HepG2 (cell line): ENCODE measurements at regions of chr14 and their contacts with region 1.

Region 1: DNA sequence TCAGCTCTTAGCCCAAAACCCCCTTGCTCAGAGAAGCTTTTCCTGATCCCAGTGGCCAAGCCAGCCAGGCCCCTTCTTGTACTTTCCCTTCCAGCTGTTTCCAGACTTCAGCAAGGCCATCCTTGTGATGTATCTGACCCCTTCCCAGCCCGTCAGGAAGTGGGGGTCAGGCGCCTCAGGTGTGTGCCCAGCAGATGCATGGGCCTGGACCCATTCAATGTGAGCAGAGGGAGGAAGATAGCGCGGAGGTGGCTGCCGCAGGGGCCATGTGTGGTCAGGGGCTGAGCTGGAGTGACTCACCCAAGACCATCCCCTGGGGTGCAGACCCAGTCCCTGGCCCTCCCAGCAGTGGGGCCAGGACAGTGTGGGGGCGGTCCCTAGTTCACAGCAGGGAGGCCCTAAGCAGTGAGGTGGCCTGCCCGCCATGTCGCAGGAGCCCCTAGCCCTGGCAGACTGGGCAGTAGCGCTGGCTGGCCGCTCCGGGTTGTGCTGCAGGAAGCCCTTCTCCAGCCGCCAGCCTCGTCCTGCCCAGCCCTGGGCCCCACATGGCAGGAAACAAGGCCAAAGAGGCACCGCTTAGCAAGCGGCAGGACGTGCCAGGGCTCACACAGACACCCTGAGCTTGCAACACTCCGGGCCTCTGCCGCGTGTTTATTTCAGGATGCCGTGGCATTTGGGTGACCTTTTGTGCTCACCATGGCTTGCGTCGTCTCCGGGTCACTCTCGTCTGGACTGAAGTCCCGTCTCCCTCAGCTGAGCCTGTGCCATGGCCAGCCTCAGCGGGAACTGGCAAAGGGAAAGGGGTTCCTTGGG is 12.0 kb downstream of the ADSS1 start:
- DNase-seq: peak; percentile 81
- ATAC-seq: peak; percentile 61
- H3K4me3 ChIP-seq: peak overlapping the region in 1 of 3 experiments; percentile 15; a peak in 2 of 6 replicates
- H3K27ac ChIP-seq: peak overlapping the region; percentile 79
- H3K4me1 ChIP-seq: peaks cover 72% of the 10 kb centered on the region
- H3K27me3 ChIP-seq: no peaks in the 10 kb centered on the region
- CTCF ChIP-seq: 0 out of 2 replicates have a peak, but pooled peaks have one; percentile 30
- EP300 ChIP-seq: peak in 1 of 2 experiments; percentile 78; a peak in 1 of 4 replicates
- POLR2A ChIP-seq: peak in 1 of 2 experiments; percentile 38; a peak in 1 of 4 replicates
- RAD21 ChIP-seq: 0 out of 2 replicates have a peak, but pooled peaks have one; percentile 19

Region 2: GRCh38 chr14:104723648-104724406 is 12.2 kb before region 1 on chr14 and contains the start of gene ADSS1:
- CTCF ChIA-PET with region 1: no interaction called
- POLR2A ChIA-PET with region 1: interaction called, 10 read pairs
- in situ Hi-C with region 1: no loop called
- intact Hi-C with region 1: no loop called
- DNase-seq: peak; percentile 24
- ATAC-seq: peak; percentile 40
- H3K4me3 ChIP-seq: peak within 1 kb of the TSS; percentile 63 to 90 (median 68)
- H3K27ac ChIP-seq: peak within 1 kb of the TSS; percentile 49
- H3K4me1 ChIP-seq: peaks cover 67% of the 10 kb centered on the region
- H3K27me3 ChIP-seq: peaks cover 0 to 3% of the 10 kb centered on the region in 2 experiments; a peak in 1 of 5 replicates
- CTCF ChIP-seq: peak; percentile 90
- EP300 ChIP-seq: no peak
- POLR2A ChIP-seq: peak in 1 of 2 experiments; percentile 27; a peak in 1 of 4 replicates
- RAD21 ChIP-seq: peak; percentile 70
- total RNA-seq, gene ADSS1: 0.98 and 1.0 TPM in 2 replicates

Region 3: DNA sequence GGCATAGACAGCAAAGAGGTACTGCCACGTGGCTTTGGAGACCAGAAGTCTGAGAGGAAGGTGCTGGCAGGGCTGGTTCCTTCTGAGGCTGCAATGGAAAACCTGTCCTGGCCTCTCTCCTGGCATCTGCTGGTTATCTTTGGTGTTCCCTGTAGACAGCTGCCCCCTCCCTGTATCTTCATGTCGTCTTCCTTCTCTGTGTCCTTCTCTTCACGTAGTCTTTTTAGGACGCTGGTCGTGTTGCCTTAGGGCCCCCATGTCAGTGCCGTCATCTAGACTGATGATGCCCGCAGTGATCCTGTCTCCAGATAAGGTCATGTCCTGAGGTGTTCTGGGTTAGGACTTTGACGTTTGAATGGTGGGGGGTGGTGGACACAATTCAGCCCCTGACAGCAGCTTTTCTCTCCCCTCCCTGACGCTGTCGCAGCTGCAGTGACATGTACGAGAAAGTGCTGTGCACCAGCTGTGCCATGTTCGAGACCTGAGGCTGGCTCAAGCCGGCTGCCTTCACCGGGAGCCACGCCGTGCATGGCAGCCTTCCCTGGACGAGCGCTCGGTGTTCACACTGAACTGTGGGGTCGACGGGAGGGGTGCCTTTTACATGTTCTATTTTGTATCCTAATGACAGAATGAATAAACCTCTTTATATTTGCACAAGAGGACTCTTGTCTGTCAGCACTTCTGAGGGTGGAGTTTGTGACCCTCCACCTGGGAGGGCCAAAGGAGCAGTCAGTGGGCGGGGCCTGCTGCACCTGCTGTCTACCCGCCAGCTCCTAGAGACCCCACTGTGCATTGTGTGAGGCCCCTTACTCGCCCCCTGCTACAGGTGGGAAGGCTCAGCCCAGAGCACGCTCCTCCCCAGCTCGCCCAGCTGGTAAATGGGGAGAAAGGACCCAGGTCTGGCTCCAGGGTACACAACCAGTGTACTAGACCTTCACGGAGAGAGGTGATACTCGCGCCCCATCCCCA is 23.2 kb after region 1 on chr14:
- CTCF ChIA-PET with region 1: no interaction called
- POLR2A ChIA-PET with region 1: no interaction called
- in situ Hi-C with region 1: no loop called
- intact Hi-C with region 1: no loop called
- DNase-seq: no peak
- ATAC-seq: no peak
- H3K4me3 ChIP-seq: no peak overlapping the region
- H3K27ac ChIP-seq: peak overlapping the region; percentile 20
- H3K4me1 ChIP-seq: peaks cover 61% of the 10 kb centered on the region
- H3K27me3 ChIP-seq: no peaks in the 10 kb centered on the region
- CTCF ChIP-seq: no peak
- EP300 ChIP-seq: no peak
- POLR2A ChIP-seq: peak in 1 of 2 experiments; percentile 51; a peak in 2 of 4 replicates
- RAD21 ChIP-seq: no peak

Region 4: GRCh38 chr14:105065280-105066228 is 329.5 kb after region 1 on chr14 and contains the start of gene GPR132:
- CTCF ChIA-PET with region 1: no interaction called
- POLR2A ChIA-PET with region 1: no interaction called
- in situ Hi-C with region 1: no loop called
- intact Hi-C with region 1: no loop called
- DNase-seq: no peak
- ATAC-seq: peak; percentile 19; the same call in 2 of the 3 replicates
- H3K4me3 ChIP-seq: no peak within 1 kb of the TSS; a peak in 1 of 6 replicates
- H3K27ac ChIP-seq: no peak within 1 kb of the TSS
- H3K4me1 ChIP-seq: peaks cover 13% of the 10 kb centered on the region
- H3K27me3 ChIP-seq: peaks cover 6 to 37% of the 10 kb centered on the region in 2 experiments; a peak in 4 of 5 replicates
- CTCF ChIP-seq: no peak
- EP300 ChIP-seq: no peak
- POLR2A ChIP-seq: no peak
- RAD21 ChIP-seq: no peak
- total RNA-seq, gene GPR132: not detected in 2 replicates